T-cell (primary cell): ENCODE measurements at regions of chr14 and their contacts with region 1.

Region 1: GRCh38 chr14:74018586-74019407 is at the starts of genes BBOF1 and ENTPD5:
- DNase-seq: peak; percentile 69 to 94 (median 83)
- ATAC-seq: peak; percentile 95 to 99 (median 97)
- H3K4me3 ChIP-seq: peak within 1 kb of the TSS; percentile 84 to 94
- H3K4me3 Mint-ChIP-seq: peak within 1 kb of the TSS; percentile 89 to 94 (median 92)
- H3K27ac ChIP-seq: peak within 1 kb of the TSS; percentile 90
- H3K27ac Mint-ChIP-seq: peak within 1 kb of the TSS; percentile 94 to 96
- H3K4me1 ChIP-seq: peaks cover 4 to 16% of the 10 kb centered on the region in 2 experiments
- H3K4me1 Mint-ChIP-seq: peaks cover 15 to 17% (median 16%) of the 10 kb centered on the region in 3 donors
- H3K27me3 ChIP-seq: no peaks in the 10 kb centered on the region
- H3K27me3 Mint-ChIP-seq: no peaks in the 10 kb centered on the region
- total RNA-seq, gene BBOF1: 1.8 to 3.1 (median 2.3) TPM
- total RNA-seq, gene ENTPD5: 7.8 to 14.6 (median 11.6) TPM

Region 2: DNA sequence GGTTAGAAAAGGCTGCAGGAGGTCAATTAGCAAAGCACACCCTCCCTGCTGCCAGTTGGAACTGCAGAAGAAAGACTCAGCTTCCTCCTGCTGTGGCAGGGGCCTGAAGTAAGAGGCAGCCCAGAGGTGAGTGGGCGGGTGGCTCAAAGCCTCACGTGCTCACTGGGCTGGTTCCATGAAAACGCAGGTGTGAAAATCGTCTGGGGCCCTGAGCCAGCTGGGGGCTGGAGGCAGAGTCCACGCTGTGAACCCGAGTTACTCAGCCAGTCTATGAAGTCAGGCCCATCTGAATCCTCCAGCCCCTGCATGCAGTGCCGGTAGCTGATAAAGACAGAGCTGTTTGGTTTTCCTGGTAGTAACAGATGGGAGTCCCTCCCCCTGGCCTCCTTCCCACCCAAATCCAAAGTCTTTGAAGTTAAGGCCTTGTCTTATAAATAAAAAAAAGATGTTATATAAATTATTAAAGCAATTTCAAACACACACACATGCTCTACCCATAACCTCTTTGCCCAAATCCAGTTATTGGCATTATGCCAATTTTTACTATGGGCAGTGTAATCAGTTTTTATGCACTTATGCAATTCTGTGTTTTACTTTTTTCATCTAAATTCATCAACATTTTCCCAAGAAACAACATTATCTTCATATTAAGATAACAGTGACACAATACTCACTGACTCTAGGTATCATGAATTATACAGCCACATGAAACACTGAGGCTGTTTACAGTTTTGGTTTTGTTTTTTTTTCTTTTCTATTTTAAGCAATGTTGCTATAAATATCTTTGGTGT is 246.8 kb before region 1 on chr14:
- CTCF ChIA-PET with region 1: no interaction called
- POLR2A ChIA-PET with region 1: interaction called in 1 of 2 experiments, 11 read pairs
- DNase-seq: peak; percentile 28 to 77 (median 53)
- ATAC-seq: peak; percentile 80 to 87 (median 87)
- H3K4me3 ChIP-seq: no peak overlapping the region
- H3K4me3 Mint-ChIP-seq: peak overlapping the region; percentile 35 to 67 (median 60)
- H3K27ac ChIP-seq: peak overlapping the region; percentile 75
- H3K27ac Mint-ChIP-seq: peak overlapping the region; percentile 85 to 93
- H3K4me1 ChIP-seq: peaks cover 32 to 79% of the 10 kb centered on the region in 2 experiments
- H3K4me1 Mint-ChIP-seq: peaks cover 74 to 82% (median 76%) of the 10 kb centered on the region in 3 donors
- H3K27me3 ChIP-seq: no peaks in the 10 kb centered on the region
- H3K27me3 Mint-ChIP-seq: no peaks in the 10 kb centered on the region